Common myeloid progenitor, CD34-positive (primary cell): ENCODE measurements at regions of chr12 and their contacts with region 1.

Region 1: GRCh38 chr12:118372541-118373495 is at the start of gene TAOK3:
- DNase-seq: peak; percentile 98 to 99 (median 99)
- H3K4me3 ChIP-seq: peak within 1 kb of the TSS; percentile 96 to 99 (median 97)
- H3K27ac ChIP-seq: peak within 1 kb of the TSS; percentile 86 to 93
- H3K4me1 ChIP-seq: peaks cover 40 to 58% (median 50%) of the 10 kb centered on the region in 4 experiments
- H3K27me3 ChIP-seq: no peaks in the 10 kb centered on the region

Region 2: GRCh38 chr12:117805865-117806264 is 567.0 kb before region 1 on chr12:
- CTCF ChIA-PET with region 1: no interaction called
- POLR2A ChIA-PET with region 1: no interaction called
- DNase-seq: no peak
- H3K4me3 ChIP-seq: no peak overlapping the region
- H3K27ac ChIP-seq: no peak overlapping the region
- H3K4me1 ChIP-seq: no peaks in the 10 kb centered on the region
- H3K27me3 ChIP-seq: peaks cover 0 to 15% (median 2%) of the 10 kb centered on the region in 5 experiments

Region 3: DNA sequence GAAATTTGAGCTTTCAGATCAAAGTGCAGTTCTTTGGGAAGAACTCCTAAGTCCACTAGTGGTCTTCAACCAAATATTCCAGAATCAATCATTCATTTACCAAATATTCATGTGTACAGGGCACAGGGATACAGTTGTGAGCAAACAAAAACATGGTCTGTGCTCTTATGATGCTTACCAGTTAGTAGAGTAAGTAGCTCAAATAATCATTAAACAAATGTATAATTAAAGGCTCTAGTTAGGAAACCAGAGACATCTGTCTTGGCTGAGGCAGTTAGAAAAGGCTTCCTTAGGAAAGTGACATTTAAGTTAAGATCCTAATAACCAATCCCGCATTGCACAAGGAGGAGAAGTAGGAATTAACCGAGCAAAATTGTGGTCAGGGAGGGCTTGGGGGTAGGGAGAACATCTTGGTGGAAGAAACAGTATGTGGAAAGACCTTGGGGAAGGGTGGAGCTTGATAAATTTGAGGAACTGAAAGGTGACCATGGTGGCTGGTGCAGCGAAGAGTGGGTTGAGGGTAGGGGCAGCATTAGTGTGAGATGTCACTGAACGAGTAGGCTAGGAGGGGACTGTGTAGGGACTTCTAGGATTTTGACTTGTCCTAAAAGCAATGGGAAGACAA is 196.9 kb before region 1 on chr12:
- CTCF ChIA-PET with region 1: interaction called, 14 read pairs
- POLR2A ChIA-PET with region 1: no interaction called
- DNase-seq: no peak
- H3K4me3 ChIP-seq: no peak overlapping the region
- H3K27ac ChIP-seq: no peak overlapping the region
- H3K4me1 ChIP-seq: no peaks in the 10 kb centered on the region
- H3K27me3 ChIP-seq: no peaks in the 10 kb centered on the region

Region 4: DNA sequence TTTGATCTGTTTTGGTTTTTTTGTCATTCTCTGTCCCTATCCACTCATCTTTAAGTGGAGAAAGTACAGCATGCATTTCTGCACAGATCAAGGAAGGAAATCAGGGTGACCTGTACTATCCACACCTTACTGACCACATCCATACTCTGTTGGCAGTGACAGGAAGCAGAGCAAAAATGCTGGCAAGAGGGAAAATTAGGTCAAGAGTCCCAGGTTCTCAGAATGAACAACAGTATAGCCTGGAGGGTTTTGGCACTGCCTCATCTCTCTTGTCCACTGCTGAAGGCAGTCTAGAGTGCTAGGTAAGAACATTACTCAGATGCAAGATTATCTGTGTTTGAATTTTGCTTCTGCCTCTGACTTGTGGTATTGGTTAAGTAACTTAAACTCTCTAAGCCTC is 70.8 kb before region 1 on chr12:
- CTCF ChIA-PET with region 1: interaction called, 135 read pairs
- POLR2A ChIA-PET with region 1: interaction called, 11 read pairs
- DNase-seq: no peak
- H3K4me3 ChIP-seq: peak overlapping the region in 1 of 7 experiments; percentile 1
- H3K27ac ChIP-seq: no peak overlapping the region
- H3K4me1 ChIP-seq: peaks cover 18 to 53% (median 35%) of the 10 kb centered on the region in 4 experiments
- H3K27me3 ChIP-seq: no peaks in the 10 kb centered on the region

Region 5: GRCh38 chr12:118312578-118312977 is 60.2 kb before region 1 on chr12:
- CTCF ChIA-PET with region 1: interaction called, 13 read pairs
- POLR2A ChIA-PET with region 1: interaction called, 8 read pairs
- DNase-seq: peak in 1 of 3 donors; percentile 45
- H3K4me3 ChIP-seq: peak overlapping the region in 2 of 7 experiments; percentile 12 to 37
- H3K27ac ChIP-seq: peak overlapping the region; percentile 51 to 68
- H3K4me1 ChIP-seq: peaks cover 29 to 76% (median 55%) of the 10 kb centered on the region in 4 experiments
- H3K27me3 ChIP-seq: no peaks in the 10 kb centered on the region

Region 6: DNA sequence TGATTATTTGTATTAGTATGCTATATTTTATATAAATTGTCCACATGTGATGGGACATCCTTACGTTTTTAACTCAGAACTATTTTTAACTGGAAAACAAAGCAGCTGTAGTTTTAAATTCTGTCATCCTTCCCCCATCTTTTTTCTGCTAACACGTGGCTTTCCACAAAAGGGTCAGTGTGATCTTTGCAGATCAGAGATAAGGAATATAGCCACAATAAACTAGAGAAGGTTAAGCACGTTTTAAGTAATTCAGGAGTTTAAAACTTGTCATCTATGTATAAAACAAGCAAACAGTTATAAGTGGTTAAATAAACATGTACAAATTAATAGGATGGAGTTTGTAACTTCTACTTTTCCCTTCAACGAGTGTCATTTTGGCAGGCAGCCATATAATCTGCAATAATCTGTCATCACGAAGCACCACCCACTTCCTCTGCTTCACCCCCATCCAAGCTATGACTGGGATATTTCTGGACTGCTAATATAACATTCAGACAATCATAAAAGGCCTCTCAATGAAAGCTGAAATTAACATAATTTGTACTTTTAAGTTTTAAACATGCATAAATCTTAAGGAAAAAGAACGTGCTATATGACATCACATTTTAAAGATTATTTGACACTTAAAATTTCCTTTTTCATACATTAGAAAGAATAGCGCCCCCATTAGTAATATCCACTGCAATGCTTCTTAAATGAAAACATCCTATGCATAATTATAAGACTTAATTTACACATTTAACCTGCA is 15.4 kb before region 1 on chr12:
- CTCF ChIA-PET with region 1: interaction called, 42 read pairs
- POLR2A ChIA-PET with region 1: interaction called, 8 read pairs
- DNase-seq: peak; percentile 92 to 97 (median 95)
- H3K4me3 ChIP-seq: peak overlapping the region in 6 of 7 experiments; percentile 43 to 84 (median 68)
- H3K27ac ChIP-seq: peak overlapping the region; percentile 55 to 88
- H3K4me1 ChIP-seq: peaks cover 34 to 77% (median 48%) of the 10 kb centered on the region in 4 experiments
- H3K27me3 ChIP-seq: no peaks in the 10 kb centered on the region

Region 7: GRCh38 chr12:118404876-118405521 is 32.2 kb after region 1 on chr12:
- CTCF ChIA-PET with region 1: no interaction called
- POLR2A ChIA-PET with region 1: no interaction called
- DNase-seq: peak; percentile 59 to 79 (median 75)
- H3K4me3 ChIP-seq: no peak overlapping the region
- H3K27ac ChIP-seq: no peak overlapping the region
- H3K4me1 ChIP-seq: no peaks in the 10 kb centered on the region
- H3K27me3 ChIP-seq: no peaks in the 10 kb centered on the region